ENCODE measurements at regions of chr9 and their contacts with region 1.

Region 1: GRCh38 chr9:126500684-126501382 is 112.9 kb upstream of the LMX1B start:
- DNase-seq: peak; percentile 69
- ATAC-seq: peak; percentile 76
- H3K4me3 ChIP-seq: no peak overlapping the region; a peak in 1 of 6 replicates
- H3K27ac ChIP-seq: no peak overlapping the region
- H3K4me1 ChIP-seq: peaks cover 32% of the 10 kb centered on the region
- H3K27me3 ChIP-seq: no peaks in the 10 kb centered on the region
- CTCF ChIP-seq: peak; percentile 99
- EP300 ChIP-seq: no peak
- POLR2A ChIP-seq: no peak
- RAD21 ChIP-seq: peak; percentile 97

Region 2: DNA sequence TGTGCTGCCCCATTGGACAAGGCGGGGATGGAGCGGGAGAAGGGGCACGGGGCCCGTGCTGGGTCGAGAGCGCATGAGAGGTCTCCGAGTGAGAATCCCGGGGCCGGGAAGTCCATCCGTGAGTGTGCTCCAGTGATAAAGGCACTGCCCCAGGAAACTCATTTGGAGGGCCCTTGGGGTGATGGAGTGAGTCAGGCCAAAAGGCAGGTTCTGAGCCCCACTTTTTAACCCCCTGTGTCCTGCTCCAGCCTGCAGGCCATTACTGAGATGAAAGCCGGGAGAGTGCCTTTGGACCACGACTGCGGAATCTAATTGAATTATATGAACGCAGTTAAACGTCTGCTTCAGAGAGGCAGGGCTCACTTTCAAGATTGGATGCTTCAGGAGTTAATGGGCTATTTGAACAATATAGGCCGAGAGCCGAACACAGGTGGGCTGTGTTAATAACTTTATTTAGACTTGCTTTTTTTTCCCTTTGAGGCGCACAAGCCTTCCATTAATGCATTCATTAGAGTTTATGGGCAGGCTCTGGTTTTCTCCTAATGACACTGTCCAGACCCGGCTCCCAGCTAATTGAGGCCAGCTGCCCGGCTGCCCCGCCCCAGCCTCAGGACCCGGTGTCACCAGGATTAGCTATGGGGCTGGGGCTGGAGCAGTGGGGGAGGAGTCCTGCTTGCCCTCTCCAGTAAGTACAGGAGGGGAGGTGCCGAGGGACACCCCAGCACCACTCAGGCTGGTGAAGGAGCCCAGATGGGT is 33.8 kb after region 1 on chr9:
- CTCF ChIA-PET with region 1: no interaction called
- POLR2A ChIA-PET with region 1: no interaction called
- in situ Hi-C with region 1: no loop called
- intact Hi-C with region 1: no loop called
- DNase-seq: no peak
- ATAC-seq: no peak
- H3K4me3 ChIP-seq: no peak overlapping the region
- H3K27ac ChIP-seq: no peak overlapping the region
- H3K4me1 ChIP-seq: peaks cover 61% of the 10 kb centered on the region
- H3K27me3 ChIP-seq: no peaks in the 10 kb centered on the region
- CTCF ChIP-seq: no peak
- EP300 ChIP-seq: no peak
- POLR2A ChIP-seq: no peak
- RAD21 ChIP-seq: no peak

Region 3: GRCh38 chr9:126558051-126558665 is 57.3 kb after region 1 on chr9:
- CTCF ChIA-PET with region 1: interaction called, 79 read pairs
- POLR2A ChIA-PET with region 1: no interaction called
- in situ Hi-C with region 1: loop called (anchors 5 kb)
- intact Hi-C with region 1: loop called (anchors 1 kb)
- DNase-seq: peak; percentile 44
- ATAC-seq: peak; percentile 82
- H3K4me3 ChIP-seq: no peak overlapping the region
- H3K27ac ChIP-seq: no peak overlapping the region
- H3K4me1 ChIP-seq: peaks cover 7% of the 10 kb centered on the region; the same call in 1 of the 2 replicates
- H3K27me3 ChIP-seq: peaks cover 1 to 11% of the 10 kb centered on the region in 2 experiments; a peak in 2 of 5 replicates
- CTCF ChIP-seq: peak; percentile 92
- EP300 ChIP-seq: no peak
- POLR2A ChIP-seq: no peak
- RAD21 ChIP-seq: peak; percentile 81